Transverse colon (tissue), 4 donors: ENCODE measurements at regions of chr17 and their contacts with region 1.

Region 1: DNA sequence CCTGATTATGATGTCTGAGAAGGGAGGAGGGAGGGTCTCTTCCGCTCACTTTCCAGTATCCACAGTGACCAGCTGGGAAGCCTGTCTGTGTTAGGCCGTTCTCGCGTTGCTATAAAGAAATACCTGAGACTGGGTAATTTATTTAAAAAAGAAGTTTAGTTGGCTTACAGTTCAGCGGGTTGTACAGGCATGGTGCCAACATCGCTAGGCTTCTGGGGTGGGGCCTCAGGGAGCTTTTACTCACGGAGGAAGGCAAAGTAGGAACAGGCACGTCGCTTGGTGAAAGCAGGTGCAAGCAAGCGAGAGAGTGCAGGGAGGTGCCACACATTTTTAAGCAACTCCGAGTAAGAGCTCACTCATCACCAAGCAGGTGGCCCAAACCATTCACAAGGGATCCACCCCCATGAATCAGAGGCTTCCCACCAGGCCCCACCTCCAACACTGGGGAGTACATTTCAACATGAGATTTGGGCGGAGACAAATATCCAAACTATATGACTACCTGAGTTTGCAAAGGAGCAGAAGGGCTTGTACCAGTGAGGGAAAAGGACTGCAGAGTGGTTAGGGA is 137.5 kb downstream of the CCDC182 start:
- DNase-seq: no peak
- H3K4me3 ChIP-seq: no peak overlapping the region
- H3K27ac ChIP-seq: no peak overlapping the region
- H3K4me1 ChIP-seq: peaks cover 21 to 38% (median 32%) of the 10 kb centered on the region in 4 donors
- H3K27me3 ChIP-seq: no peaks in the 10 kb centered on the region
- CTCF ChIP-seq: no peak
- EP300 ChIP-seq: no peak
- POLR2A ChIP-seq: no peak

Region 2: DNA sequence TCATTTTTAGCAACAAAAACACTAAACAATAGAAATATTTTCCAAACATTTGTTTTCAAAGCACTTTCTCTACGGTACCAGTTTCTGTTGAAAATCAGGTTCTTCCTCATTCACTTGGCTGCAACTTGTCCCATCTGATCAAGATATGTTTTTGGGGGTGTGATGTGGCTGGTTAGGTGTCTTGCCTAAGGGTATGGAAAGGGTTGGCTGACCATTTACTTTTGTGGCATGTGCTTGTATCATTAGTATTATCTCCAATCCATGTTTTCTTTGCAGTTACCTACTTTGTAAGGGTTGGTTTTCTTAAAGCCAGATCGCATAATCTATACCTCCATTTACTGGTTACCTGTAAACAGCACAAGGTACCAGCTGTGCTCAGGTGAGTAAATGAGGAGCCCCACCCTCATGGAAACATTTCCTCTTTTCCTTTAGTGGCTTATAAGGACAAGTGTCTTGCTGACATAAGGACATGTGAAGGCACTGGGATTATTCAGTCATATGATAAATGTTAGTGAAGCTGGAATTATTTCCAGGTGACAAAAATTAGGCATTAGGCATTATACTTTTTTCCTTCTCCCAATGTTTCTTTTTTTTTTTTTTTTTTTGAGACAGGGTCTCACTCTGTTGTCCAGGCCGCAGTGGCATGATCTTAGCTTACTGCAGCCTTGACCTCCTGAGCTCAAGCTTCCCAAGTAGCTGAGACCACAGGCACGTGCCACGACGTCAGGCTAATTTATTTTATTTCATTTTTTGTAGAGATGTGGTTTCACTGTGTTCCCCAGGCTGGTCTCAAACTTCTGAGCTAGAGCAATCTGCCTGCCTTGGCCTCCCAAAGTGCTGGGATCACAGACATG is 24.5 kb before region 1 on chr17:
- in situ Hi-C with region 1: no loop called
- intact Hi-C with region 1: loop called (anchors 1 kb)
- DNase-seq: no peak
- H3K4me3 ChIP-seq: no peak overlapping the region
- H3K27ac ChIP-seq: no peak overlapping the region
- H3K4me1 ChIP-seq: peaks cover 0 to 7% (median 0%) of the 10 kb centered on the region in 4 donors
- H3K27me3 ChIP-seq: no peaks in the 10 kb centered on the region
- CTCF ChIP-seq: no peak
- EP300 ChIP-seq: no peak
- POLR2A ChIP-seq: no peak

Region 3: DNA sequence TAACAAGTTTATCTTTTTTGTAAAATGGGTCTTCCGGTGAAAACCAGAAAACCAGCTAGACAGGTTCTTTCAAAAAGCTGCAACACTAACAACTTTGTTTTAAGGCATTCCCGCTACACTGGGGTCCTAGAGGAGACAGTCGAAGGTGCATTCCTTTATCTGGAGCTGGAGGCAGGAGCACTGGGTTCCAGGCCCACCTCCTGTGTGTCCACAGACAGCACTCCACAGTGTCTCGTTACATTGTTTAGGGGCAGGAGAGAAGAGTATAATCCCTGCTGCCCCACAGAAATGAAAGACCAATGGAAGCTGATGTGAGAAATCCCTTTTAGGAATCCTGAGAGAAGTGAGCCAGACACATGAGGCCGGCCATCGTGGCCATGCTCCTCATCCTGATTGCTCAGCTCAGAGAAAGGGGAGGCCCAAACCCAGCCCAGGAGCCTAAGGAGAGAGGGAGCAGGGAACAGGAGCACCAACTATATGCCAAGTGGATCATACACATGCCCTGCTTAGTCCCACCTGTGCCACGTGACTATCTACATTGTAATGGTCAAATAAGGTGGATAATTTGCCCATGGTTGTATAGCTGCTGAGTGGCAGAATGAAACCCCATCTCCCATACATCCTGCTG is 78.0 kb after region 1 on chr17:
- in situ Hi-C with region 1: no loop called
- intact Hi-C with region 1: no loop called
- DNase-seq: no peak
- H3K4me3 ChIP-seq: no peak overlapping the region
- H3K27ac ChIP-seq: no peak overlapping the region
- H3K4me1 ChIP-seq: no peaks in the 10 kb centered on the region
- H3K27me3 ChIP-seq: no peaks in the 10 kb centered on the region
- CTCF ChIP-seq: no peak
- EP300 ChIP-seq: no peak
- POLR2A ChIP-seq: no peak